GM18951 (cell line): ENCODE measurements at regions of chr16 and their contacts with region 1.

Region 1: DNA sequence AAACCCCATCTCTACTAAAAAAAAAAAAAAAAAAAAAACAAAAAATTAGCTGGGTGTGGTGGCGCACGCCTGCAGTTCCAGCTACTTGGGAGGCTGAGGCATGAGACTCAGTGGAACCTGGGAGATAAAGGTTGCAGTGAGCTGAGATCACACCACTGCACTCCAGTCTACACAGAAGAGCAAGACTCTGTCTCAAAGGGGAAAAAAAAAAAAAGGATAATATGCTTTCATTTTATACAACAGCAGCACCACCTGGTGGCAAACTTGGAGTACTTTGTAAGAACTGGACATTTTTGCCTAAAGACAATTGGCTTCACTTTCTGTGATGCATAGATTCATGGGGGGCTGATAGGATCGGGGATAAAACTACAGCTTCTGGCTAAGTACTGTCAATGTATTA is 8.5 kb downstream of the CHTF8 start:
- POLR2A ChIP-seq: no peak

Region 2: GRCh38 chr16:68843482-68844210 is 280.3 kb before region 1 on chr16 and contains the start of gene TANGO6:
- in situ Hi-C with region 1: loop called (anchors 25 kb)
- POLR2A ChIP-seq: peak; percentile 81

Region 3: DNA sequence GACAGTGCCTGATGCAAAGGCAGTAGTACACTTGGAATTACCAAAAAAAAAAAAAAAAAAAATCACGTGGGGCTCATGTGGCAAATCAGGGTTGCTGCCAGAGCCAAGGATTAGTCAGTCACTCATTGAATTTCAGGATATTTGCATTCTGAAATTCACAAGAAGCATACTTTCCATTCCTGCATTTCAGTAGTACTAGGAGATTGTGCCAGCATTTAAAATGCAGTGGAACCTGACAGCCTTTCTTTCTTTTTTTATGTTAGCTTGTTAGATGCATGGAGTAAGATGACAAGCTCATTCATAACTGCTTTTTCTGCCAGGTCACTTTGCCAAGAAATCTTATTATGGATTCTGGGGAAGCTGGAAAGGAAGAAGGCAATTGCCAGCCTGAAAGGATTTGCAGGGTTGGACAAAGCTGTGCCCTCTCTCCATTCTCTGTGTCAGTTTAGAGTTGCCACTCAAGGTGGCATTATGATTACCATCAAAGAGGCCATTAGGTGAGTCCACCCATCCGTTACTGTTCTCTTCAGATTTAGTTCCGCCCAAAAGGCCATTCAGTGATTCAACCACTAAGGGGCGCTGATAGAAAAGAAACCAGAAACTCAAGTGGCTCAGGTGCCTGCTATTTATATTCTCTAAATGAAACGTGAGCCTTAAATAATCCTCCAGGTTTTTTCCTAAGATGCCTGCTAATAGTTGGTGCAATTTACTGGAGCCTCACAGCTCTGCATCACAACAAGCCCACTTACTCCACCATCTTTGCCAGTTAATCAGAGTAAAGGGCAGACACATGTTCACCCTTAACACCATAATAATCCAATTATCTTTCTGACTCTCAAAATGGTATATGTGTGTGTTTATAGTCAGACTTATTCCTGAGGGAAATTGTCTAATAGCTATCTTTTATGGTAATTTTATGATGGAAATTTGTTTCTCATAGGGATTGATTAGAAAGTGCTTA is 221.6 kb before region 1 on chr16:
- in situ Hi-C with region 1: loop called (anchors 25 kb)
- POLR2A ChIP-seq: no peak